Aorta (tissue), 5 donors: ENCODE measurements at regions of chr10 and their contacts with region 1.

Region 1: GRCh38 chr10:104121520-104122224 is at the start of gene SFR1:
- DNase-seq: peak; percentile 99 to 100
- ATAC-seq: peak; percentile 98
- H3K4me3 ChIP-seq: peak within 1 kb of the TSS; percentile 67 to 81
- H3K27ac ChIP-seq: peak within 1 kb of the TSS; percentile 94 to 96
- H3K4me1 ChIP-seq: no peaks in the 10 kb centered on the region
- H3K27me3 ChIP-seq: no peaks in the 10 kb centered on the region
- total RNA-seq, gene SFR1: 6.0 to 6.5 TPM

Region 2: DNA sequence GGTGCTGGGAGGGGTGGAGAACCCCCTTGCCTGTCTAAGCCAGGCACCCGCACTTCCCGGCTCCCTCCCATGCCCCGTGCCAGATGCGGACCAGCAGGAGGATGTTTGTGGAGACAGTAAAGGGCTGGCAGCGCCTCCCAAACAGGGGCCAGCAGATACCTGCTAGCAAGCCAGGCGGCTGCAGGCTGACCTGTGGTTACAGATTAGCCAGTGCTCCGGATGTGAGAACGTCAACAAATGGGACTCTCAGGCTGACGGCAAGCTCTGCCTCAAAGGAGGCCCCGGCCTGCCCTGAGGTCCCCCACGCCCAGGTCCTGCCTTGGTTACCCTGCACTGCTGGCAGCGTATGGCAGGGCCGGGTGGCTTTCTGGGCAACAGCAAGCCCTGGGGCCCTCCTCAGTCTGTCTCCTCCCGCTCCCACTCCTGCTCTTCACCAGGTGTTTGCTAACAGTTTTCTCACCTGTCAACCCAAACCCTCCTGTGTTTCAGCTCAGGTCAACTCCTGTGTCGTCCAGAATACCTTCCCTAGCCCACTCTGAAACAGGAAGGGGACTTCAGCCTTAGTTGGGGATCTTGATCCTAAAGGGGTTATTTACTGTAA is 542.8 kb before region 1 on chr10:
- intact Hi-C with region 1: no loop called
- DNase-seq: no peak
- ATAC-seq: no peak
- H3K4me3 ChIP-seq: no peak overlapping the region
- H3K27ac ChIP-seq: no peak overlapping the region
- H3K4me1 ChIP-seq: no peaks in the 10 kb centered on the region
- H3K27me3 ChIP-seq: no peaks in the 10 kb centered on the region

Region 3: DNA sequence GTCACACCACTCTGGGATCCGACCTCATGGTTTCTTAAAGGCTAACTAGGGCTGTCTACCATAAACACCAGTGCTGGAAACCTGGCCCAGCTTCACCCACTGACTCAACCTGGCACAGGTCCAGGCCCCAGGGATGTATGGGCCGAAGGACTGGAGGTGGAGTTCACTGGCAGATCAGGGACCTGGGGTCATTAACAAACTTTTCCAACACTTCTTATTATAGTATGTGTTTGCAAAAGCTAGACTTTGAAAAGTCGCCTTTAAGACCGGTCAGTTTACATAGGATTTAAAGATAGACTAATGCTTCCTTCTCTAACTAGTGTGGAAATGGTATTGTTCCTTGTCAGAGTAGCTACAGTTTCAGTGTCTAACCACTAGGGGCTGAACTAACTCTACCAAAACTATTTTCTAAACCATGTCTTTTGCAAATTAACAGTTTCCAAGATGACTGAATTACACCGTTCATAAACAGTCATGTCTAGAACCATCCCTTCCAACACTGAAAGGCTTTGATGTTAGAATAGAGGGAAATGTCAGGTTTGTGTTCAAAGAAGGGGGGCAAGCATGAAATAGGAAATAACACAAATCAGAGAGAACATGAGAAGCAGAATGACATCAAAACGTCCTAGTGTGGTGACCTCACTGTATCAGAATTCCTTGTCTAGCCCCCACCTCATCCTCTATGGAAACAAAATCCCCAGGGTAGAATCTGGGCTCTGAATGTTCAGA is 233.4 kb before region 1 on chr10:
- intact Hi-C with region 1: loop called (anchors 5 kb)
- DNase-seq: peak; percentile 85 to 96
- ATAC-seq: peak; percentile 88
- H3K4me3 ChIP-seq: no peak overlapping the region
- H3K27ac ChIP-seq: peak overlapping the region; percentile 60 to 78
- H3K4me1 ChIP-seq: peaks cover 3 to 4% of the 10 kb centered on the region in 2 donors
- H3K27me3 ChIP-seq: no peaks in the 10 kb centered on the region

Region 4: GRCh38 chr10:103918053-103918846 is 203.4 kb before region 1 on chr10 and contains the start of gene STN1:
- intact Hi-C with region 1: loop called in 1 of 2 experiments (anchors 5 kb)
- DNase-seq: peak; percentile 98 to 99
- ATAC-seq: peak; percentile 98
- H3K4me3 ChIP-seq: peak within 1 kb of the TSS; percentile 70 to 86
- H3K27ac ChIP-seq: peak within 1 kb of the TSS; percentile 86 to 97
- H3K4me1 ChIP-seq: peaks cover 0 to 2% of the 10 kb centered on the region in 2 donors
- H3K27me3 ChIP-seq: no peaks in the 10 kb centered on the region
- total RNA-seq, gene STN1: 20.3 to 24.2 TPM

Region 5: GRCh38 chr10:103966671-103967447 is 154.8 kb before region 1 on chr10 and contains the start of gene SLK:
- intact Hi-C with region 1: loop called in 1 of 2 experiments (anchors 1 kb)
- DNase-seq: peak; percentile 89 to 94
- ATAC-seq: peak; percentile 95
- H3K4me3 ChIP-seq: peak within 1 kb of the TSS; percentile 87 to 100
- H3K27ac ChIP-seq: peak within 1 kb of the TSS; percentile 80 to 93
- H3K4me1 ChIP-seq: peaks cover 0 to 4% of the 10 kb centered on the region in 2 donors
- H3K27me3 ChIP-seq: no peaks in the 10 kb centered on the region
- total RNA-seq, gene SLK: 47.0 to 50.2 TPM

Region 6: GRCh38 chr10:104045151-104046089 is 76.3 kb before region 1 on chr10:
- intact Hi-C with region 1: loop called (anchors 5 kb)
- DNase-seq: peak in 1 of 2 donors; percentile 61
- ATAC-seq: peak; percentile 72
- H3K4me3 ChIP-seq: no peak overlapping the region
- H3K27ac ChIP-seq: no peak overlapping the region
- H3K4me1 ChIP-seq: no peaks in the 10 kb centered on the region
- H3K27me3 ChIP-seq: no peaks in the 10 kb centered on the region